Esophagus muscularis mucosa (tissue), 4 donors: ENCODE measurements at regions of chr3 and their contacts with region 1.

Region 1: DNA sequence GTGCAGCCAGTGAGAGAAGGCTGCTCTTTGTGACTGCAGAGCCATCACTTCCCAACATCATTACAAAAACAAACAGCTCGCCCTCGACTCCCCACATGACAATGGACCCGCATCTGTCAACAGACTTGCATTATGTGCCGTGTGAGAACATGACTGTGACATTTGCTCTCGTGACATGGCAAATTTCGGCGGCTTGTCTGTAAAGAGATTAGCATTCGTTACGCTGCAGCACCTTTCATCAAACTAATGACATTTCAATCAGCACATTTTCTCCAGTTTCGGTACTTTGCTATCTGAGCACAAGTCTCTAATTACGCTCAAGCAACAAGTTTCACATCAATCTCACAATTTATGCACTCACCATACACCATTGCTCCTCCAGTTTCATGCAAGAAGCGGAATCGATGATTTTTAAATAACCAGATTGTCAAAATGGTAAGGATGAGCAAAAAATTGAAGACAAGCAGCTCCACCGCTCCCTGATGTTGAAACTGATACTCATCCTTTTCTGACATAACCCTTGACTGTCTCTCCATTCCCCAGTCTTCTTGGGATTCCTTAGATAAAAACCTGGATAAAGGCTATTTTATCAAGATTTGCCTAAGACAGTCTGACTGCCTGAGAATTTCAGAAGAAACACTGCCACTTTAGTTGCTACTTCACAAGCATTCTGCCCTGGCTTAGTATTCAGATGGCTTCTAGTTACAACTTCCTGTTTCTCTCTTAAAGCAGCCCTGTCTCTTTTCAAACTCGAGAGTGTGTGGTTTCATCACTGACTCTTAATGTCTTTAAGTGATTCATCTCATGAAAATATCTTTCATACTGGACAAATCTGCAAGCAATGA is at the start of gene SLC9A9:
- DNase-seq: no peak
- H3K4me3 ChIP-seq: peak within 1 kb of the TSS; percentile 62 to 73 (median 69)
- H3K27ac ChIP-seq: peak within 1 kb of the TSS; percentile 45 to 70 (median 66)
- H3K4me1 ChIP-seq: peaks cover 0 to 38% (median 31%) of the 10 kb centered on the region in 4 donors
- H3K27me3 ChIP-seq: no peaks in the 10 kb centered on the region
- CTCF ChIP-seq: no peak
- EP300 ChIP-seq: no peak
- POLR2A ChIP-seq: no peak
- total RNA-seq, gene SLC9A9: 13.4 to 15.0 (median 14.4) TPM

Region 2: DNA sequence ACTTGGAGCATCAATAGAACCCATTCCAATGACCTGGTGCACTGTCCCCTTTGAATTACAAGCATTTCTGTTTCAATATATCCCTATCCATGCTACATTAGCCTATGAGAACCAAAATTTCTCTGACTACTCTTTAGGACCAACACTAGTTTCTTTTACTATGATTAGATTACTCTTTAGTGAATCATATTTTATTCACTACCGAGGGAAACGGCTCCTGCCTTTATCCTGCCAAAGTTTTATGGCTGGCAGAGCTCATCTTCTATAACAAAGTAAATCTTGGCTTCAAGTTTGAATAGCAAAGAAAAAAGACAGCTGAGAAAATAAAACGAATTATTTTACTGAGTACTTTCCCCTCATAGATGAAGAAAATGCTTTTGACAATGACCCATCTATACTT is 120.6 kb before region 1 on chr3:
- intact Hi-C with region 1: no loop called
- DNase-seq: no peak
- H3K4me3 ChIP-seq: no peak overlapping the region
- H3K27ac ChIP-seq: no peak overlapping the region
- H3K4me1 ChIP-seq: peaks cover 0 to 17% (median 9%) of the 10 kb centered on the region in 4 donors
- H3K27me3 ChIP-seq: no peaks in the 10 kb centered on the region
- CTCF ChIP-seq: no peak
- EP300 ChIP-seq: no peak
- POLR2A ChIP-seq: no peak

Region 3: DNA sequence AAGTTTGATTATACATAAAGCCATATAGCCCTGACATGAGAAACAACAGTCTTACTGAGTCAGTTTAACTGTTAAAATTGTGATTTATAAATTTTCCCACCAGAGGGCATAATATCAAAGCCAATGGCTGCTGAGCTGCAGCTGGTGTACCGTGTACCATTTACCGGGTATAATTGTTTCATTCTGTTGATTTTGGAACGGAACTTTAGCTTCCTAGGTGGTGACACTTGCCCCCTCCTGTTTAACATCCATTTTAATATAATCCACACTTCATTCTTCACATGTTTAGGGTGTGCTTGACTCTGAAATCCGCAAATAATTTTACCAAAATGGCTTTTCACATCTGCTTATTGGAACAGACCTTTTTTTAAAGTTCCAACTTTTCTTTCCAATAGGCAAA is 72.5 kb before region 1 on chr3:
- intact Hi-C with region 1: loop called (anchors 5 kb)
- DNase-seq: no peak
- H3K4me3 ChIP-seq: peak overlapping the region; percentile 23 to 39 (median 31)
- H3K27ac ChIP-seq: no peak overlapping the region
- H3K4me1 ChIP-seq: peaks cover 0 to 30% (median 23%) of the 10 kb centered on the region in 4 donors
- H3K27me3 ChIP-seq: no peaks in the 10 kb centered on the region
- CTCF ChIP-seq: peak; percentile 51 to 57 (median 55)
- EP300 ChIP-seq: no peak
- POLR2A ChIP-seq: no peak

Region 4: GRCh38 chr3:144294659-144295538 is 446.9 kb after region 1 on chr3:
- intact Hi-C with region 1: no loop called
- DNase-seq: no peak
- H3K4me3 ChIP-seq: no peak overlapping the region
- H3K27ac ChIP-seq: no peak overlapping the region
- H3K4me1 ChIP-seq: no peaks in the 10 kb centered on the region
- H3K27me3 ChIP-seq: no peaks in the 10 kb centered on the region
- CTCF ChIP-seq: no peak
- EP300 ChIP-seq: no peak
- POLR2A ChIP-seq: no peak